T-cell (primary cell): ENCODE measurements at regions of chr1 and their contacts with region 1.

Region 1: DNA sequence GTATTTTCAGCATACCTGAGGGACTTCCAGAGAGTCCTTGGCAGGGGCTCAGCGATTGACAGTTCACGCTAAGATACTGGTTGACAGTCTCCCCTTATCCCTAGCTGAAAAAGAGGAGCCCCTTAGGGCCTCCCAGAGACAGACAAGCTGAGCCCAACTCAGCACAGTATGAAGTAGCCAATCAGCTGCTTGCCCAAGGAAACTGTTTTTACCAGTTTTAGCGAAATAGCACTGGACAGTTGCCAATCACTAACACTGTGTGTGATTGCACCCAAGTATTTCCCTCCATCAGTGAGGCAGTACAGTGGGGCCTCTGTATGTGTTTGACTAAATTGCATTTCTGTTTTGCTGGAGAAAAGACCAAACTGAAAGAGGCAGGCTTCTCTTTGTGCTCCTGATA is 27.0 kb downstream of the KHDRBS1 start:
- DNase-seq: no peak
- ATAC-seq: no peak
- H3K4me3 ChIP-seq: no peak overlapping the region
- H3K4me3 Mint-ChIP-seq: no peak overlapping the region
- H3K27ac ChIP-seq: no peak overlapping the region
- H3K27ac Mint-ChIP-seq: no peak overlapping the region
- H3K4me1 ChIP-seq: no peaks in the 10 kb centered on the region
- H3K4me1 Mint-ChIP-seq: peaks cover 2 to 8% (median 4%) of the 10 kb centered on the region in 3 donors
- H3K27me3 ChIP-seq: no peaks in the 10 kb centered on the region
- H3K27me3 Mint-ChIP-seq: no peaks in the 10 kb centered on the region

Region 2: DNA sequence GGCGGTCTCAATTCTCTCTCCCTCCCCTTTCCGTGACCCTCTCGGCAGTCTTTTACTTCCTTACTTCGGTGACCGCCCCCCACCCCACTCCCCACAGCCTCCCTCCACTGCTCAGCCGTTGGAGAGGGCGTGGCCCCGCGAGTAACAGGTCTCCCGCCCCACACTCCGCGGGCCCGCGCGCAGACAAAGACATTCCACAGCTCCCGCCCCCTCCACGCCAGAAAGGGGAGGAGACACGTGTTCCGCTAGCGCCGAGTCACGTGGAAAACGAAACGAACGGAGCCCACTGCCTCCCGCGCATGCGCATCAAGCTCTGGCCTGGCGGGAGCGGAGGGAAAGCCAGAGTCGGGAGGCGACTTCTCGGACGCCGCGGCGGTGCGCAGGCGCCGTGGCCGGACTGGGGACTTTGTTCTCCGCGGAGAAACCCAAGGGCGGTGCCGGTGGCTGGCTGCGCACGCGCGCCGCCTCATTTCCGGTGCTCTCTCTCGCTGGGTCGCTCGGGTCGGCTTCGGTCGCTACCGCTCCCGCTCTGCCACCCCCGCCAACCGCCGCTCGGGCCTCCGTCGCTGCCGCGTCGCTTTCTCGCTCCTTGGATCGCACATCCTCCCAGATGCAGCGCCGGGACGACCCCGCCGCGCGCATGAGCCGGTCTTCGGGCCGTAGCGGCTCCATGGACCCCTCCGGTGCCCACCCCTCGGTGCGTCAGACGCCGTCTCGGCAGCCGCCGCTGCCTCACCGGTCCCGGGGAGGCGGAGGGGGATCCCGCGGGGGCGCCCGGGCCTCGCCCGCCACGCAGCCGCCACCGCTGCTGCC is 27.1 kb before region 1 on chr1 and contains the start of gene KHDRBS1:
- CTCF ChIA-PET with region 1: no interaction called
- POLR2A ChIA-PET with region 1: interaction called, 7 to 10 read pairs
- DNase-seq: peak; percentile 92 to 99 (median 95)
- ATAC-seq: peak; percentile 83 to 86 (median 84)
- H3K4me3 ChIP-seq: peak within 1 kb of the TSS; percentile 79 to 96
- H3K4me3 Mint-ChIP-seq: peak within 1 kb of the TSS; percentile 93 to 98 (median 96)
- H3K27ac ChIP-seq: peak within 1 kb of the TSS; percentile 81
- H3K27ac Mint-ChIP-seq: peak within 1 kb of the TSS; percentile 94 to 96
- H3K4me1 ChIP-seq: peaks cover 17 to 29% of the 10 kb centered on the region in 2 experiments
- H3K4me1 Mint-ChIP-seq: peaks cover 34 to 44% (median 39%) of the 10 kb centered on the region in 3 donors
- H3K27me3 ChIP-seq: no peaks in the 10 kb centered on the region
- H3K27me3 Mint-ChIP-seq: no peaks in the 10 kb centered on the region
- total RNA-seq, gene KHDRBS1: 98.9 to 115 (median 111) TPM